Activated CD8-positive, alpha-beta T cell treated with anti-CD3 and anti-CD28 coated beads, Interleukin-2, amount 10 ng/mL, durations not matched to agents 7 days and 5 days (primary cell): ENCODE measurements at regions of chr10 and their contacts with region 1.

Region 1: GRCh38 chr10:100535715-100536353 is at the start of gene HIF1AN:
- DNase-seq: peak; percentile 94
- ATAC-seq: peak; percentile 98
- H3K4me3 Mint-ChIP-seq: no peak within 1 kb of the TSS
- H3K27ac Mint-ChIP-seq: peak within 1 kb of the TSS; percentile 21
- H3K4me1 Mint-ChIP-seq: peaks cover 14% of the 10 kb centered on the region
- H3K27me3 Mint-ChIP-seq: no peaks in the 10 kb centered on the region
- total RNA-seq, gene HIF1AN: 46.5 to 48.1 TPM

Region 2: GRCh38 chr10:100346765-100347567 is 188.9 kb before region 1 on chr10 and contains the start of gene SCD:
- CTCF ChIA-PET with region 1: interaction called, 10 read pairs
- POLR2A ChIA-PET with region 1: no interaction called
- DNase-seq: peak; percentile 95
- ATAC-seq: peak; percentile 94
- H3K4me3 Mint-ChIP-seq: peak within 1 kb of the TSS; percentile 96
- H3K27ac Mint-ChIP-seq: peak within 1 kb of the TSS; percentile 90
- H3K4me1 Mint-ChIP-seq: peaks cover 67% of the 10 kb centered on the region
- H3K27me3 Mint-ChIP-seq: no peaks in the 10 kb centered on the region
- total RNA-seq, gene SCD: 239 to 240 TPM

Region 3: GRCh38 chr10:100524638-100525037 is 11.2 kb before region 1 on chr10:
- CTCF ChIA-PET with region 1: interaction called, 60 read pairs
- POLR2A ChIA-PET with region 1: interaction called, 8 read pairs
- DNase-seq: no peak
- ATAC-seq: no peak
- H3K4me3 Mint-ChIP-seq: no peak overlapping the region
- H3K27ac Mint-ChIP-seq: no peak overlapping the region
- H3K4me1 Mint-ChIP-seq: peaks cover 31% of the 10 kb centered on the region
- H3K27me3 Mint-ChIP-seq: no peaks in the 10 kb centered on the region

Region 4: DNA sequence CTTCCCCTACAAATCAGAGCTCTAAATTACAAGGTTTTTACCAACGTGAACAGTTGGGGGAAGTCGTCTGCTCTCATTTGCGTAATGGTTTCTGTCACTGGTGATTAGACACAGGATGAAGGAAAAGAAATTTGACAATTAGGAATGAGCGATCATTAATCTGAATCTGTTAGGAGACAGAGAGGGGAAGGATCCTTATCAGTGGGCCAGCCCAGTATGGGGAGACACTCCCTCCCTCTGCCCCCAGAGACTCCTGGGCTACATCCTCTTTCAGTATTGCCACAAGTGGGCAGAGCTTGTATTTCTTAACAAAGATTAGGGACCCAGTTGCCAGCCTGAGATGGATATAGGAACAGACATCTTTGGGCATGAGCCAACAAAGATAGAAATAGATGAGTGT is 15.4 kb after region 1 on chr10:
- CTCF ChIA-PET with region 1: interaction called, 13 read pairs
- POLR2A ChIA-PET with region 1: interaction called, 6 read pairs
- DNase-seq: no peak
- ATAC-seq: no peak
- H3K4me3 Mint-ChIP-seq: no peak overlapping the region
- H3K27ac Mint-ChIP-seq: peak overlapping the region; percentile 9
- H3K4me1 Mint-ChIP-seq: peaks cover 20% of the 10 kb centered on the region
- H3K27me3 Mint-ChIP-seq: no peaks in the 10 kb centered on the region